ENCODE measurements at regions of chr1 and their contacts with region 1.

Region 1: DNA sequence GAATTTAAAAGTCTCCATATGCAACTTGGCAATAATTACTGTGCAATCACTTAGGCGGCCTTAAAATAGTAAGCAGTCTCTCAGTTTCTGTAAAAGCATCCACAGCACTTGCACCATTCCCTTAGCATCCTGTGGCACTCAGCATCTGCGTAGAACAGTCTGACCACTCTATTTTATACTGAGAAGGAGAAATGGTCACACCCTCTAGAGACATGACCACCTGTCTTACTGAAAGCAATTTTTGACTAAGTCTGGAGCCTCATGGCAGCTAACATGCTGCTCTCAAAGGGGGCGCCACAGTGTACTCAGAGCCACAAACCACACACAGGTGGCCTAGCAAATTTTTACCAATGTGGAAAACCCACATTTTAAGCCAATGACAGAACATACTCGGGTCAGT is 62.0 kb downstream of the KCNK1 start:
- DNase-seq: peak; percentile 20
- CTCF ChIP-seq: peak; percentile 29

Region 2: DNA sequence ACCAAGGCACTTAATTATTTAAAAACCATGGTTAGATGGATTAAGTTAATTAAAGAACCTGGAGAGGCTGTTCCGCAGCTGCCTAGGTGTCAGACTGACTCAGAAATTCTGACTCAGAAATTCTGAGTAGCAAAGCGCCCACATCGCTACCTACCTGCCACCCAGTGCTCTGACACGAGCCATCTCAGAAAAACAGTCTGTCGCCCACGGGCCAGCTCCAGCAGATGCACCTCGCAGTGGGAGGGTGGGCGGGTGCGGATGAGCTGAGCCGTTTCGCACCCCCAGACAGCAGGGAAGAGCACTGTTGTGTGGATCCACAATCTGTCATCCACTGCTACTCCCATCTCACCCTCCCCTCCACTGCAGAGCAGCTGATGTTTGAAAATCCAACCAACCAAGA is 48.5 kb before region 1 on chr1:
- in situ Hi-C with region 1: loop called (anchors 10 kb)
- DNase-seq: no peak
- CTCF ChIP-seq: no peak

Measured in GM13977 (cell line).